CD8-positive, alpha-beta T cell (primary cell): ENCODE measurements at regions of chr12 and their contacts with region 1.

Region 1: DNA sequence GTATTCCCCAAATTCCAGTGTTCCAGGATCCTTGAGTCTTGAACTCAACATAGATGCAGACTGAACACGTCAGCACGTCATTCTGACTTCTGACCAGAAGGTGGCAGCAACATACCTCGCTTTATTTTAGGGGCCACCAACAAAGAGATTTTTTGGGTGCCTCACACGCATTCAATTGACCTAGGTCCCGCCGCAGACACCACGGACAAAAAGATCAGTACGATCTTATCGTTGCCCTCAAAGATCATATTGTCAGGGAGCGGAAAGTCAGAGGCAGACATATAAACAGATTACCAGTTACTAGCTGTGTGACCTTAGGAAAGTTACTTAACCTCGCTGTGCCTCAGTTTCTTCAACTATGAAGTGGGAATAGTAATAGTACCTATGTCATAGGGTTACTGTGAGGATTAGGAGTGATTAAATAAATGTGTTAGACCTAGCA is 6.5 kb upstream of the PRPH start:
- DNase-seq: peak; percentile 52 to 82 (median 70)
- ATAC-seq: peak; percentile 89
- H3K4me3 ChIP-seq: no peak overlapping the region
- H3K4me3 Mint-ChIP-seq: no peak overlapping the region
- H3K27ac ChIP-seq: no peak overlapping the region
- H3K27ac Mint-ChIP-seq: no peak overlapping the region
- H3K4me1 ChIP-seq: no peaks in the 10 kb centered on the region
- H3K4me1 Mint-ChIP-seq: no peaks in the 10 kb centered on the region
- H3K27me3 ChIP-seq: peaks cover 0 to 4% of the 10 kb centered on the region in 2 experiments
- H3K27me3 Mint-ChIP-seq: peaks cover 29% of the 10 kb centered on the region
- CTCF ChIP-seq: peak; percentile 91

Region 2: DNA sequence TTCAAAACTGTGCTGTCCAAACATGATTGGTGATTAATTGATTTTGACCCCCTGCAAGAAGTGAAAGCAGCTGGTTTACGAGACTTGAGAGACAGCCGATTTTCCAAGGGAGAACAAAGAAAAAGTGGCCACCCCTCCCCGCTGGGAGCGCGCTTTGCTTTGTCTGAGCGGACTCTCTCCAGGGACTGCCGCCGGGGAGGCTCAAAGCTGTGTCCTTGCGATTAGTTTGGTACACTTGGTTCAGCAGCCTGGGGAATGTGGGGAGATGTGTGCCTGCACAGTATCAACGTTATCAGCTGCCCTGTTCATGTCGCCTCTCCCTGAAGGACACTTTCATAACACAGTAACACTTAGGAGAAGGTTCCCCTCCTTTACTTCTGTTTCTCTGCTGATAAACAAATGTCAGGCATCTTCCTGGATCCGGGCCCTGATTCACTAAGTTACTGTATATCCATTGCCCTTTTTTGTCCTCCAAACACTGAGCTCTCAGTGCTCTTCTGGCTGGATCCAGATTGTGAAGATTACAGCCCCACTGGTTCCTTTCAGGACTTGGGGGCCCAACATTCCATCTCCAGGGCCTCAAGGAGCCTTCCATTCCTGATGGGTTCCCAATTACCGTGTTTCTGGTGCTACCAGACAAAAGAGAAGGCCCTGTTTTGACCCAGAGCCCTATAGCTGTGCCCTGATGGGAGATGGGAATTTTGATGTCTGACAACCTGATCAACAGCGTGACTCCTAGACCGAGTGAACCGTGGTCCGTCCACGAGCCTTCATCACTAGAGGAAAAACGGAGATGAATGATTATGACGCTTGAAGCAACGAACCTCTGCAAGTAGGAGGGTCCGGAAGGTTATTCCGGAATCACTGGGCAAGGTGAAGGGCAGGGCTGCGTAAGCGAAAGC is 55.2 kb before region 1 on chr12:
- CTCF ChIA-PET with region 1: no interaction called
- POLR2A ChIA-PET with region 1: no interaction called
- intact Hi-C with region 1: no loop called
- DNase-seq: peak in 1 of 9 experiments; percentile 13
- ATAC-seq: no peak
- H3K4me3 ChIP-seq: no peak overlapping the region
- H3K4me3 Mint-ChIP-seq: peak overlapping the region; percentile 69
- H3K27ac ChIP-seq: no peak overlapping the region
- H3K27ac Mint-ChIP-seq: no peak overlapping the region
- H3K4me1 ChIP-seq: peaks cover 8% of the 10 kb centered on the region
- H3K4me1 Mint-ChIP-seq: peaks cover 10% of the 10 kb centered on the region
- H3K27me3 ChIP-seq: no peaks in the 10 kb centered on the region
- H3K27me3 Mint-ChIP-seq: no peaks in the 10 kb centered on the region
- CTCF ChIP-seq: no peak

Region 3: DNA sequence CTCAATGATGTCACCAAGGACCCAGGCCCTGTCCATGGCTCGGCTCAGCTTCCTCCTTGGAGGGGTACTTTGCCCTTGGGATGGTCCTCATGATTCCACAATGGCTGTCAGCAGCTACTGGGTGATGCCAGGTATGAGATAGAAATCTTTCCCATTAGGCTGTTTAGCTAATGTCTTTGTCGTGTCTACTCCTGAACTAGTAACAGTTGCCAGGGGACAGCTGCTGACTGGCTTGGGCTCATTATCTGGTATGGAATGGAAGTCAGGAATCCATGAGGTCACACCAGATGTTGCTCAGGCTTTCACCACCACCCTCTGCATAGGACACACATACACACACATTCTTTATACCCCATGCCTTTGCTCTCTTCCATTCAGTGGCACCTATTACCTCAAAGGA is 15.7 kb after region 1 on chr12:
- CTCF ChIA-PET with region 1: interaction called, 24 read pairs
- POLR2A ChIA-PET with region 1: no interaction called
- intact Hi-C with region 1: no loop called
- DNase-seq: no peak
- ATAC-seq: no peak
- H3K4me3 ChIP-seq: no peak overlapping the region
- H3K4me3 Mint-ChIP-seq: no peak overlapping the region
- H3K27ac ChIP-seq: no peak overlapping the region
- H3K27ac Mint-ChIP-seq: no peak overlapping the region
- H3K4me1 ChIP-seq: no peaks in the 10 kb centered on the region
- H3K4me1 Mint-ChIP-seq: no peaks in the 10 kb centered on the region
- H3K27me3 ChIP-seq: peaks cover 0 to 3% of the 10 kb centered on the region in 2 experiments
- H3K27me3 Mint-ChIP-seq: peaks cover 42% of the 10 kb centered on the region
- CTCF ChIP-seq: no peak

Region 4: DNA sequence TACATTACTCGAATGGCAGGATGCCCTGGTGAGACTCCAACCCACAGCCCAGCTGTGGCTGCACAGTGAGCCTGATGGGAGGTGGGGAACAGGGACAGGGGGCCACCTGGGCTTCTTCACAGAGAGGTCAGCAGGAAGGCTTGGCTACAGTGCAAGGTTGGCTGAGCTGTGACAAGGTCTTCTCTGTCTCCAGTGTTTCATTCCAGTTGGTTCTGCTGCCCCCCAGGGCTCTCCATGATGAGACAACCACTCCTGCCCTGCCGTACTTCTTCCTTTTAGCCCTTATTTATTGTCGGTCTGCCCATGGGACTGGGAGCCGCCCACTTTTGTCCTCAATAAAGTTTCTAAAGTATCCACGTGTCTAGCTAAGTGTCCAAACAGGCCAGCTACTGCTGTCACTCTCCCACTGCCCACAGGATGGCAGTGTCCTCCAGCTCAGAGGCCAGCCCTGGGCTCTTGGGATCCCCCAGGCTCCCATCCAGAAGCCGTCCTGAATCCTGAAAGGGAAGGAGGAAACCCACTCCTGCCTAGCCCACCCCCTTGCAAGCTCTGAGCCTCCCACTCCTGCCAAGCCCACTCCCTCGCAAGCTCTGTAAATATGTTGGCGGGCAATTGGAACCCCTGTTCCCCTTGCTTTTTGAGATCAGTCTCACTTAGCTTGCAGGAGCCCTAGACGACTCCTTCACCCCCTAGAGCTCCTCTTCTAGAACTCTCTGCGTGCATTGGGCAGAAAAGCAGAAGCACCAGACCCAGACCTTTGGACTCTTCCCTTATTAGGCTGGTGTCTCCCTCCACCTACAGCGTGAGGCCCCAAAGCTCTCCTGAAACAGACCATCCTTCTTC is 43.2 kb after region 1 on chr12:
- CTCF ChIA-PET with region 1: interaction called, 117 read pairs
- POLR2A ChIA-PET with region 1: no interaction called
- intact Hi-C with region 1: no loop called
- DNase-seq: peak in 2 of 9 experiments; percentile 44 to 52
- ATAC-seq: peak; percentile 70
- H3K4me3 ChIP-seq: no peak overlapping the region
- H3K4me3 Mint-ChIP-seq: no peak overlapping the region
- H3K27ac ChIP-seq: no peak overlapping the region
- H3K27ac Mint-ChIP-seq: no peak overlapping the region
- H3K4me1 ChIP-seq: peaks cover 5% of the 10 kb centered on the region
- H3K4me1 Mint-ChIP-seq: peaks cover 12% of the 10 kb centered on the region
- H3K27me3 ChIP-seq: peaks cover 15 to 18% of the 10 kb centered on the region in 2 experiments
- H3K27me3 Mint-ChIP-seq: peaks cover 38% of the 10 kb centered on the region
- CTCF ChIP-seq: peak; percentile 49

Region 5: GRCh38 chr12:49342066-49342913 is 53.9 kb after region 1 on chr12:
- CTCF ChIA-PET with region 1: interaction called, 118 read pairs
- POLR2A ChIA-PET with region 1: interaction called, 3 read pairs
- intact Hi-C with region 1: loop called (anchors 1 kb)
- DNase-seq: peak; percentile 39 to 84 (median 74)
- ATAC-seq: peak; percentile 66
- H3K4me3 ChIP-seq: peak overlapping the region; percentile 45 to 52
- H3K4me3 Mint-ChIP-seq: peak overlapping the region; percentile 73
- H3K27ac ChIP-seq: no peak overlapping the region
- H3K27ac Mint-ChIP-seq: no peak overlapping the region
- H3K4me1 ChIP-seq: peaks cover 43% of the 10 kb centered on the region
- H3K4me1 Mint-ChIP-seq: peaks cover 45% of the 10 kb centered on the region
- H3K27me3 ChIP-seq: peaks cover 22 to 55% of the 10 kb centered on the region in 2 experiments
- H3K27me3 Mint-ChIP-seq: peaks cover 42% of the 10 kb centered on the region
- CTCF ChIP-seq: peak; percentile 88

Region 6: DNA sequence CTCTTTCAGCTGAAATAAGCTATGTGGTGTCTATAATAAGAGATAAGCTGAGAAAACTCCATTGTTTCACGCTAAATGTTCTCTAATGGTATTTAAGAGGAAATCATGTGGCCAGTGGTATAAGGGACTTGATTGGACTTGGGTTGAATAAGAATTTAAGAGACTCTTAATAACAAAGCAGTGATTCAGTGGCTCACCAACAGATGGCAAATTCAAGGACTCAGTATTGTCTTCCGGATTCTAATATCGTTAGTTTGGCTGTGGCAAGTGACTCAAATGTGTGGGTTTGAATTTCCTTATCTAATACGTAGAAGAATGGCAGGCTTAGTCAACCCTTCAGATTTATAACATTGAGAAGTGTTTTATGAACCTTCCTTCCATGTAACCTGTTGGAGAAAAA is 201.3 kb after region 1 on chr12:
- CTCF ChIA-PET with region 1: no interaction called
- POLR2A ChIA-PET with region 1: no interaction called
- intact Hi-C with region 1: no loop called
- DNase-seq: no peak
- ATAC-seq: no peak
- H3K4me3 ChIP-seq: no peak overlapping the region
- H3K4me3 Mint-ChIP-seq: no peak overlapping the region
- H3K27ac ChIP-seq: no peak overlapping the region
- H3K27ac Mint-ChIP-seq: no peak overlapping the region
- H3K4me1 ChIP-seq: no peaks in the 10 kb centered on the region
- H3K4me1 Mint-ChIP-seq: no peaks in the 10 kb centered on the region
- H3K27me3 ChIP-seq: no peaks in the 10 kb centered on the region
- H3K27me3 Mint-ChIP-seq: no peaks in the 10 kb centered on the region
- CTCF ChIP-seq: no peak

Region 7: GRCh38 chr12:49515266-49515665 is 226.8 kb after region 1 on chr12:
- CTCF ChIA-PET with region 1: interaction called, 25 read pairs
- POLR2A ChIA-PET with region 1: interaction called, 5 read pairs
- intact Hi-C with region 1: loop called in 1 of 2 experiments (anchors 1 kb)
- DNase-seq: no peak
- ATAC-seq: no peak
- H3K4me3 ChIP-seq: no peak overlapping the region
- H3K4me3 Mint-ChIP-seq: no peak overlapping the region
- H3K27ac ChIP-seq: no peak overlapping the region
- H3K27ac Mint-ChIP-seq: no peak overlapping the region
- H3K4me1 ChIP-seq: no peaks in the 10 kb centered on the region
- H3K4me1 Mint-ChIP-seq: no peaks in the 10 kb centered on the region
- H3K27me3 ChIP-seq: no peaks in the 10 kb centered on the region
- H3K27me3 Mint-ChIP-seq: no peaks in the 10 kb centered on the region
- CTCF ChIP-seq: no peak